Activated CD8-positive, alpha-beta T cell treated with anti-CD3 and anti-CD28 coated beads, Interleukin-2, amount 10 ng/mL, durations not matched to agents 7 days and 5 days (primary cell): ENCODE measurements at regions of chr17 and their contacts with region 1.

Region 1: DNA sequence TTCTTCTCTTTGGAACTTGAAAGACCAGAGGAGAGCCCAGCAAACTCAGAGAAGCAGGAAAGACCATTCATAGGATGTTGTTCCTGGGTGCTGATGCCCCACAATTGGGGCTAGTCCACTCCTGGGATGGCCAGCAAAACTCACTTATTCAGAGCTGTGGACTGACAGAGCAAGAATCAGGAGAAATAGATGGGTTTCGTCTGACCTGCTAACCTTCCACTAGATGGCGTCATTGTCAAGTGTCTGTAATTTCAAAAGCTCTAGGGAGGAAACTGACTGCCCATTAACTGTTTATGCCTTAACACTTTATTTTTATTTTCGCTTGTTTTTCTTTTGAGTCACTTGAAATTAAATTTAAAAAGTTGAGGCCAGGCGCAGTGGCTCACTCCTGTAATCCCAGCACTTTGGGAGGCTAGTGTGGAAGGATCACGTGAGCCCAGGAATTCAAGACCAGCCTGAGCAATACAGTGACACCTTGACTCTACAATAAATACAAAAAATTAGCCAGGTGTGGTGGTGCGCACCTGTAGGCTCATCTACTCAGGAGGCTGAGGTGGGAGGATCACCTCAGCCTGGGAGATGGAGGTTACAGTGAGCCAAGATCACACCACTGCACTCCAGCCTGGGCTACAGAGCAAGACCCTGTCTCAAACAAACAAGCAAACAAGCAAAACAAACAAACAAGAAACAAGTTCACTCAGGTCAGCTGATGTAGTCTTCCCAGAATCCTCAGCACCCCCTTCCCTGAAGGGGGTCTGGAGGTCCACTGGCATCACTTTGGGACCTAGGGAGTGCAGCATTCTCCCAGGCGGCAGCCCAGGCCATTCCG is 28.6 kb upstream of the MILR1 start:
- DNase-seq: peak; percentile 63
- ATAC-seq: peak; percentile 86
- H3K4me3 Mint-ChIP-seq: no peak overlapping the region
- H3K27ac Mint-ChIP-seq: no peak overlapping the region
- H3K4me1 Mint-ChIP-seq: peaks cover 14% of the 10 kb centered on the region
- H3K27me3 Mint-ChIP-seq: peaks cover 3% of the 10 kb centered on the region

Region 2: DNA sequence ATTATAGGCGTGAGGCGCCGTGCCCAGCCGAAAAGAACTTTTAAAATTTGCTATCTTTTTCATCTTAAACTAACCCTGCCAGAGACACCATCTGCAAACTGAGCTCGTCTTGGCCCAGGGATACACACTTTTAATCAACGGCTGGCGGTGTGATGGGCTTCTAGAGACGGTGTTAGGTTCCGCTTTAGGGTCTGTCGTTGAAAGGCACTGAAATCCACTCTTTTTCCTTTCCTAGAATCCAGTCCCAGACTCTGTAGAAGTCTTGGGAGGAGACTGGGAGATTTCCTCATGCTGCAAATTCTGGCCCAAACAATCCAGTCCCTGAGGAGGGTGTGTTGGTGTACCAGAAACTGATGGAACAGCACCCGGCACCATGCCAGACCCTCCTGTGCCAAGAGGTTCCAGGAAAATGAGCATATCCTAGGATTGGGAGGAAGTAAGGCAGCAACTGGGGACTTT is 105.3 kb before region 1 on chr17:
- CTCF ChIA-PET with region 1: interaction called, 131 read pairs
- POLR2A ChIA-PET with region 1: no interaction called
- DNase-seq: no peak
- ATAC-seq: no peak
- H3K4me3 Mint-ChIP-seq: no peak overlapping the region
- H3K27ac Mint-ChIP-seq: no peak overlapping the region
- H3K4me1 Mint-ChIP-seq: no peaks in the 10 kb centered on the region
- H3K27me3 Mint-ChIP-seq: peaks cover 4% of the 10 kb centered on the region

Region 3: GRCh38 chr17:64378890-64379354 is 41.4 kb before region 1 on chr17:
- CTCF ChIA-PET with region 1: interaction called, 14 read pairs
- POLR2A ChIA-PET with region 1: no interaction called
- DNase-seq: no peak
- ATAC-seq: no peak
- H3K4me3 Mint-ChIP-seq: no peak overlapping the region
- H3K27ac Mint-ChIP-seq: no peak overlapping the region
- H3K4me1 Mint-ChIP-seq: peaks cover 25% of the 10 kb centered on the region
- H3K27me3 Mint-ChIP-seq: no peaks in the 10 kb centered on the region

Region 4: GRCh38 chr17:64406321-64407200 is 13.8 kb before region 1 on chr17:
- CTCF ChIA-PET with region 1: interaction called, 51 read pairs
- POLR2A ChIA-PET with region 1: no interaction called
- DNase-seq: no peak
- ATAC-seq: peak; percentile 14
- H3K4me3 Mint-ChIP-seq: no peak overlapping the region
- H3K27ac Mint-ChIP-seq: peak overlapping the region; percentile 34
- H3K4me1 Mint-ChIP-seq: peaks cover 39% of the 10 kb centered on the region
- H3K27me3 Mint-ChIP-seq: no peaks in the 10 kb centered on the region

Region 5: DNA sequence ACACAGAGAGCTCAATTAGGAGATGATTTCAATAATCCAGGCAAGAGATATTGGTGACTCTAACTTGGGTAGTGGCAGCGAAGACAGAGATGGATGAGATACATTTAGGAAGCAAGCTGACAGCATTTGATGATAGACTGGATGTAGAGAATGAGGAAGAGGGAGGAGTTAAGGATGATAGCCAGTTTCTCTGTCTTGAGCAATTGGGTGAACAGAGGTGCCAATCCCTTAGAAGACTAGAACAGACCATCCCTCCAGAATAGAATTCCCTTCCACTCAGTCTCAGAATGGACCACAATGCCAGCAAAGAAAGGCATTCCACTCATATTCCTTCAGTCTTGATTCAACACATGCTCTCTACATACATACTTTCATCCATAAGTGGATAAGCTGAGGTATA is 59.3 kb after region 1 on chr17:
- CTCF ChIA-PET with region 1: interaction called, 40 read pairs
- POLR2A ChIA-PET with region 1: no interaction called
- DNase-seq: no peak
- ATAC-seq: no peak
- H3K4me3 Mint-ChIP-seq: no peak overlapping the region
- H3K27ac Mint-ChIP-seq: no peak overlapping the region
- H3K4me1 Mint-ChIP-seq: peaks cover 10% of the 10 kb centered on the region
- H3K27me3 Mint-ChIP-seq: no peaks in the 10 kb centered on the region

Region 6: DNA sequence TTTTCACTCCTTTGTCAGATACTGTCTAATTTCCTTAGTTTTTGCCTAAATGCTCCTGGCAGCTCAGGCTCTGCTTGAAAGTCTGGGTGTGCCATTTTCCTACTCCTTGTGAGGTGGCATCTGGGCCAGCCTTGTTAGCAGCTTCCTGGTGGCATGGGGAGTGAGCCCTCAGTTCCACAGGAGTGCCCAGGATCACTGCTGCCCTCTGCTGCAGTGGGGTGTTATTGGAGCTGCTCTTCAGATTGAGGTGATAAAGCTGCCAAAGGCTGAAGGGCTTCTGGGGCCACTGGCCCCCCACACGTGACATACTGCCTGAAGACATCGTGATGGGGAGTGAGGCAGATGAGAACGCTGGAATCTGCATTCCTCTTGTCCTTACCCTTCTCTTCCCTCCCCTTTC is 113.8 kb after region 1 on chr17:
- CTCF ChIA-PET with region 1: interaction called, 17 read pairs
- POLR2A ChIA-PET with region 1: interaction called, 3 read pairs
- DNase-seq: no peak
- ATAC-seq: peak; percentile 35
- H3K4me3 Mint-ChIP-seq: no peak overlapping the region
- H3K27ac Mint-ChIP-seq: peak overlapping the region; percentile 39
- H3K4me1 Mint-ChIP-seq: no peaks in the 10 kb centered on the region
- H3K27me3 Mint-ChIP-seq: no peaks in the 10 kb centered on the region

Region 7: GRCh38 chr17:64679688-64680216 is 259.4 kb after region 1 on chr17:
- CTCF ChIA-PET with region 1: no interaction called
- POLR2A ChIA-PET with region 1: no interaction called
- DNase-seq: no peak
- ATAC-seq: no peak
- H3K4me3 Mint-ChIP-seq: no peak overlapping the region
- H3K27ac Mint-ChIP-seq: no peak overlapping the region
- H3K4me1 Mint-ChIP-seq: no peaks in the 10 kb centered on the region
- H3K27me3 Mint-ChIP-seq: no peaks in the 10 kb centered on the region

Region 8: DNA sequence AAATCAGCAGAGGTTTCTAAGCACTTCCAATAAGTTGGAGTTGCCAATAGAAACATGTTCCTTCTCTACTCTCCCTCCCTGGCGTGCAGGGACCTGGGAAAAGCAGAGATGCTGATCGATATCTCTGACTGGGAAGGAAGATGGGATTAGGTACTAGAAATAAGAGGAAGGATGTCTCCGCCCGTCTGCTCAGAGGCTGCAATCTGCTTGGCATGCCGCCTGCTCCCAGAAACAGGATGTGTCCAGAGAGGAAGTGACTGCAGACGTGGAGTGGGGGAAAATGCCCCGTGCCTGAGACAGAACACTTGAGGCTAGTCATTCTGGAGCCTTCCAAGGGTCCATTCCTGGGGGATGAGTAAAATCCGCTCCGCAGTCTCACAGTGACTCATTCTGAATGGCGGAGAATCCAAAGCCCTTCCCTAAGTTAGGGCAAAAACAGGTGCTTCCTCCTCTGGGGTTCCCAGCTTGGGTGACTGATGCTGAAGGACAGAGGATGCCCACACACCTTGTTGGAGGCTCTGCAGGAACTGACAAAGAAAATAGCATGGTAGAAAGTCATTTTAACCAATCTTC is 286.7 kb after region 1 on chr17:
- CTCF ChIA-PET with region 1: no interaction called
- POLR2A ChIA-PET with region 1: no interaction called
- DNase-seq: no peak
- ATAC-seq: no peak
- H3K4me3 Mint-ChIP-seq: no peak overlapping the region
- H3K27ac Mint-ChIP-seq: peak overlapping the region; percentile 8
- H3K4me1 Mint-ChIP-seq: peaks cover 56% of the 10 kb centered on the region
- H3K27me3 Mint-ChIP-seq: no peaks in the 10 kb centered on the region